Activated naive CD4-positive, alpha-beta T cell treated with anti-CD3 and anti-CD28 coated beads for 36 hours (primary cell): ENCODE measurements at regions of chr12 and their contacts with region 1.

Region 1: GRCh38 chr12:48936379-48936979 is 11.2 kb upstream of the FKBP11 start:
- DNase-seq: peak; percentile 90
- H3K4me3 Mint-ChIP-seq: no peak overlapping the region
- H3K27ac Mint-ChIP-seq: peak overlapping the region; percentile 47
- H3K4me1 Mint-ChIP-seq: peaks cover 10% of the 10 kb centered on the region
- H3K27me3 Mint-ChIP-seq: no peaks in the 10 kb centered on the region

Region 2: GRCh38 chr12:48279101-48279500 is 657.4 kb before region 1 on chr12:
- CTCF ChIA-PET with region 1: no interaction called
- intact Hi-C with region 1: no loop called
- DNase-seq: no peak
- H3K4me3 Mint-ChIP-seq: no peak overlapping the region
- H3K27ac Mint-ChIP-seq: no peak overlapping the region
- H3K4me1 Mint-ChIP-seq: no peaks in the 10 kb centered on the region
- H3K27me3 Mint-ChIP-seq: peaks cover 2% of the 10 kb centered on the region

Region 3: DNA sequence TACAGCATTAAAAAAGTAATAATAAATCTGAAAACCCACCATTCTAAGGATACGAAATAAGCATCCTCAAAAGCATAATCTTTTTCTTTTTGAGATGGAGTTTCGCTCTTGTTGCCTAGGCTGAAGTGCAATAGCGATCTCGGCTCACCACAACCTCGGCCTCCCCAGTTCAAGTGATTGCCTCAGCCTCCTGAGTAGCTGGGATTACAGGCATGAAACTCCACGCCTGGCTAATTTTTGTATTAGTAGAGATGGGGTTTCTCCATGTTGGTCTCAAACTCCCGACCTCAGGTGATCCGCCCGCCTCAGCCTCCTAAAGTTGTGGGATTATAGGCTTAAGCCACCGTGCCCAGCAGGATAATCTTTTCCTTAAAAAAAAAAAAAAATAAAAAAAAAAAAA is 224.3 kb before region 1 on chr12:
- CTCF ChIA-PET with region 1: no interaction called
- intact Hi-C with region 1: no loop called
- DNase-seq: no peak
- H3K4me3 Mint-ChIP-seq: no peak overlapping the region
- H3K27ac Mint-ChIP-seq: no peak overlapping the region
- H3K4me1 Mint-ChIP-seq: peaks cover 57% of the 10 kb centered on the region
- H3K27me3 Mint-ChIP-seq: no peaks in the 10 kb centered on the region

Region 4: DNA sequence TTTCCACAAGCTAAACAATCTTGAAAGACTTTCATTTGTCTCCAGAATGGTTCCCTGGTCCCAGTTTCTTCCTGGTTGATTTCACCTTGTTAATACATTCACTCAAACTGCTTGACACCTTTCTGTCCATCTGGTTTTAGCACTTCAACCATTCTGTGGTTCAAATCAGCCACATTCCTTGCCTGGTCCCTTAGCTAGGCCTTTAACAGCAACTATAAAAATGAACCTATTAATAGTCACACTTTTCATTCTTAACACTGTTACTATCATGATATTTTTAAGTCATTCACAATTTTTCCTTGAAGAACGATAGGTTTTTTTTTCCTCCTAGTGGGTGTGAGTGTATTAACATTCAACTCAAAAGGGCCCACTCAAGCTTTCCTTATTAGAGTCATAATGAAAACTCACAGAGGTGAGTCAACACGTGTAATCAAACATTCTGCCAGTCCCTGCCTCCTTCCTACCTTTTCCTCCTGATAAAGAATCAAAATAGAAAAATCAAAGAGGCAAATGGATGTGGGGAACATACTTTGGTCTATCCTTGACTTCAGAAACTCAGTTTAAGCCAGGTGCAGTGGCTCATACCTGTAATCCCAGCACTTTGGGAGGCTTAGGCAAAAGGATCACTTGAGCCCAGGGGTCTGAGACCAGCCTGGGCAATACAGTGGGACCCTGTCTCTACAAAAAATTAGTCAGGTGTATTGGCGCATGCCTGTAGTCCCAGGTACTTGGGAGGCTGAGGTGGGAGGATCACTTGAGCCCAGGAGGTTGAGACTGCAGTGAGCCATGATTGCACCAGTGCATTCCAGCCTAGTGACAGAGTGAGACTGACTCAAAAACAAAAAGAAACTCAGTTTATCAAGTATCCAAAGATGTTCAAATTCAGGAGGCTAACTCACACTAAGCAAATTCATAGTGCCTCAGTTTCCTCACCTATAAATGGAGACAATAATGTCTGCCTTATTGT is 185.4 kb before region 1 on chr12:
- CTCF ChIA-PET with region 1: no interaction called
- intact Hi-C with region 1: loop called (anchors 5 kb)
- DNase-seq: peak; percentile 28
- H3K4me3 Mint-ChIP-seq: no peak overlapping the region
- H3K27ac Mint-ChIP-seq: peak overlapping the region; percentile 82
- H3K4me1 Mint-ChIP-seq: peaks cover 19% of the 10 kb centered on the region
- H3K27me3 Mint-ChIP-seq: no peaks in the 10 kb centered on the region

Region 5: DNA sequence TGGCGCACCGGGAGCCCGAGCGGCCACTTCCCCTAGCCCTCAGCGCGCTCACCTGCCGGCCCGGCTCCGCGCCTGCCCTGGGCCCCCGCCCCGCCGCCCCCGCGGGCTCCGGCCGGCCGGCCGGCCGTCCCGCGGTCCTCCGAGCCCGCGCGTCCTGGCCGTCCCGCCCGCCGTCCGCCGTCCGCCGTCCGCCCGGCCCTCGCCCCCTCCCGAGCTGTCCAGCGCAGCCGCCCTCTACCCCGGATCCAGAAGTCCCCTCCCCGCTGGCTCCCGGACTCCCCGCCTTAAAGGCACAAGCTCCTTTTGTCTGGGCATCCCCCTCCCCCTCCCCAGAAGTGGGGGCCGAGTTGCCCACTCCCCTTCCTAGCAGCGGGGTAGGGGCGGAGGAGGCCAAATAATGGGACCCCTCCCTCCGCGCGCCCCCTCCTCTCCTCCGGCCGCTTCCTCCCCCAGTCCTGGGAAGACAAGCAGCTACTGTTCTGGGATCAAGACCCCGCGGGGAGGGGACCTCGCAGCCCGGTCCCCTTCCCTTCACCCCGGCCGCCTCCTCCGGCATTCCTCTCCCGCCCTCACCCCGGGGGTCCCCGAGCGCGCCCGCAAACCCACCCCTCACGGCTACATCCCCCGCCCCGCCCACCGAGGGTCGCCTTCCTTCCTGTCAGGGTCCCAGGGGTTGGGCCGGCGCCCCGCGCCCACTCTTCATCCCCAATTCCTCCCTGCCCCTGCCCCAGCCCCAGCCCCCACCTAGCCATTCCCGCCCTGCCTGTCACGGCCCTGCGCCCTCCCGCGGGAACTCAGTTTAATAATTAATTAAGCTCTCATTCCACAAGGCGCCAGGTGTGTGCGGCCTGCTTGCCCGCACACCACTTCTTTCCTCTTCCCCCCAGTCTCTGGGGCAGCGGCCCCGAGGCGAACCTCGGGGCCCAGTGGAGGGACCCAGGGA is 147.4 kb before region 1 on chr12 and contains the start of gene ADCY6:
- CTCF ChIA-PET with region 1: no interaction called
- intact Hi-C with region 1: no loop called
- DNase-seq: no peak
- H3K4me3 Mint-ChIP-seq: peak within 1 kb of the TSS; percentile 64
- H3K27ac Mint-ChIP-seq: no peak within 1 kb of the TSS
- H3K4me1 Mint-ChIP-seq: peaks cover 4% of the 10 kb centered on the region
- H3K27me3 Mint-ChIP-seq: peaks cover 40% of the 10 kb centered on the region
- total RNA-seq, gene ADCY6: 0.05 to 0.15 TPM

Region 6: GRCh38 chr12:48924617-48925303 is 11.7 kb before region 1 on chr12:
- CTCF ChIA-PET with region 1: interaction called, 35 read pairs
- intact Hi-C with region 1: loop called (anchors 1 kb)
- DNase-seq: peak; percentile 81
- H3K4me3 Mint-ChIP-seq: peak overlapping the region; percentile 91
- H3K27ac Mint-ChIP-seq: peak overlapping the region; percentile 96
- H3K4me1 Mint-ChIP-seq: peaks cover 49% of the 10 kb centered on the region
- H3K27me3 Mint-ChIP-seq: no peaks in the 10 kb centered on the region